Activated naive CD4-positive, alpha-beta T cell treated with anti-CD3 and anti-CD28 coated beads for 36 hours (primary cell): ENCODE measurements at regions of chr15 and their contacts with region 1.

Region 1: DNA sequence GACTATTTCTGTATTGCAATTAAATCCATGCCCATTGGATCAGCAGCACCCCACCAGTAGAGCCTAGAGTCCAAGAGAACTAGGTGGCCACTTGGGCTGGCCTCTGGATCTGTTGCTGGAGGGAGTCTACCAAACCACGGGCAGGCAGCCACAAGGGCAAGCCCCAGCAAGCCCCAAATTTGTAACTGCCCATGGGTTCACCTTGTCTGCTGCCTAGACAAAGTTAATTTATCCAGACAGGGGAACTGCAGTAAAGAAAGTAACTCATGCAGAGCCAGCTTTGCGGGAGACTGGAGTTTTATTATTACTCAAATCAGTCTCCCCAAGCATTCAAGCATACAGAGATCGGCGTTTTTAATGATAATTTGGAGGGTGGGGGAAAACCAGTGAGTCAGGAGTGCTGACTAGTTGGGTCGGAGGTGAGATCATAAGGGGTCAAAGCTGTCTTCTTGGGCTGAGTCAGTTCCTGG is 74.0 kb upstream of the TERB2 start:
- DNase-seq: peak; percentile 74
- H3K4me3 Mint-ChIP-seq: no peak overlapping the region
- H3K27ac Mint-ChIP-seq: no peak overlapping the region
- H3K4me1 Mint-ChIP-seq: peaks cover 25% of the 10 kb centered on the region
- H3K27me3 Mint-ChIP-seq: peaks cover 5% of the 10 kb centered on the region

Region 2: GRCh38 chr15:44788748-44789147 is 93.8 kb before region 1 on chr15:
- CTCF ChIA-PET with region 1: no interaction called
- intact Hi-C with region 1: loop called (anchors 1 kb)
- DNase-seq: peak; percentile 73
- H3K4me3 Mint-ChIP-seq: no peak overlapping the region
- H3K27ac Mint-ChIP-seq: peak overlapping the region; percentile 81
- H3K4me1 Mint-ChIP-seq: peaks cover 41% of the 10 kb centered on the region
- H3K27me3 Mint-ChIP-seq: no peaks in the 10 kb centered on the region

Region 3: GRCh38 chr15:44910981-44911625 is 28.6 kb after region 1 on chr15:
- CTCF ChIA-PET with region 1: no interaction called
- intact Hi-C with region 1: loop called (anchors 1 kb)
- DNase-seq: no peak
- H3K4me3 Mint-ChIP-seq: no peak overlapping the region
- H3K27ac Mint-ChIP-seq: no peak overlapping the region
- H3K4me1 Mint-ChIP-seq: peaks cover 6% of the 10 kb centered on the region
- H3K27me3 Mint-ChIP-seq: peaks cover 2% of the 10 kb centered on the region